ENCODE measurements at regions of chr22 and their contacts with region 1.

Region 1: GRCh38 chr22:22748297-22748743 is 103.9 kb downstream of the GGTLC2 start:
- DNase-seq: peak in 5 of 9 experiments; percentile 22 to 77 (median 45)
- ATAC-seq: peak; percentile 52
- H3K4me3 ChIP-seq: no peak overlapping the region
- H3K4me3 Mint-ChIP-seq: no peak overlapping the region
- H3K27ac ChIP-seq: no peak overlapping the region
- H3K27ac Mint-ChIP-seq: peak overlapping the region; percentile 32
- H3K4me1 ChIP-seq: peaks cover 12% of the 10 kb centered on the region
- H3K4me1 Mint-ChIP-seq: peaks cover 35% of the 10 kb centered on the region
- H3K27me3 ChIP-seq: no peaks in the 10 kb centered on the region
- H3K27me3 Mint-ChIP-seq: peaks cover 8% of the 10 kb centered on the region
- CTCF ChIP-seq: peak; percentile 69

Region 2: DNA sequence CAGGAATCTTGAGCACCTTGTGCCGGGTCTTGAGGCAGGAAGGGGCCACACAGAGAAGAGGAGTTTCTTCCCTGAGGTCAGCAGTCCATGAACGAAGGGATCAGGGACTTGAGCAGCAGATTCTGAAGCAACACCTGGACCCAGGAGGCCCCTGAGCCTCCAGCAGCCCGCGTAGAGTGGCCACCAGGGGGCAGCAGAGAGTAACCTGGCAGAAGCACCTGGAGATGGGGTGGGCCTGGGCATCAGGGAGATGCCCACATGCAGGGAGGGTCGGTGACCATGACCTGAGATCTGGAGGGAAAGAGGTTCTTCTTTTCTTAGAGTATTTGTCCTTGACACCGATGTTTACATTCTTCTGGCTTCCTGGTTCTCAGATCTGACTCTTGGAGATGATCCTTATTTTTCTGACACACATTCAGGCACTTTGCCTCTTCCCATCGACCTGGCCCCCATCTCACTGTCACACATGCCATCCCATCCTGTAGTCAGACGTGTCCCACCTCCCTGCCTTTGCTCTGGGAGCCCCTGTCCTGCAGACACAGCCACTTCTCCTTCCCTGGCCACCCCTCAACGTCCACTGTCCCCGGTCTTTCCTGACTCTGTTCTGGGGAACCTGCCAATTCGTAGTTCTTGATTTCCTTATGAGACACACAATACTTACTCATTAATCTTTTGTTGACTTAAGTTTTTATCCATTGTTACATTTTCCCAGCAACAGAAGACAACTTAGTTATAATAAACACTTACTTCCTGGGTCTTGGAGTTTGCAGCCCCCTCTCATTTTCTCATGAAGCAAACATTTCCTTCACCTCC is 37.4 kb before region 1 on chr22:
- CTCF ChIA-PET with region 1: interaction called, 28 read pairs
- POLR2A ChIA-PET with region 1: no interaction called
- intact Hi-C with region 1: loop called (anchors 1 to 2 kb)
- DNase-seq: peak; percentile 61 to 90 (median 79)
- ATAC-seq: peak; percentile 70
- H3K4me3 ChIP-seq: no peak overlapping the region
- H3K4me3 Mint-ChIP-seq: no peak overlapping the region
- H3K27ac ChIP-seq: no peak overlapping the region
- H3K27ac Mint-ChIP-seq: no peak overlapping the region
- H3K4me1 ChIP-seq: no peaks in the 10 kb centered on the region
- H3K4me1 Mint-ChIP-seq: no peaks in the 10 kb centered on the region
- H3K27me3 ChIP-seq: no peaks in the 10 kb centered on the region
- H3K27me3 Mint-ChIP-seq: no peaks in the 10 kb centered on the region
- CTCF ChIP-seq: peak; percentile 87

Region 3: DNA sequence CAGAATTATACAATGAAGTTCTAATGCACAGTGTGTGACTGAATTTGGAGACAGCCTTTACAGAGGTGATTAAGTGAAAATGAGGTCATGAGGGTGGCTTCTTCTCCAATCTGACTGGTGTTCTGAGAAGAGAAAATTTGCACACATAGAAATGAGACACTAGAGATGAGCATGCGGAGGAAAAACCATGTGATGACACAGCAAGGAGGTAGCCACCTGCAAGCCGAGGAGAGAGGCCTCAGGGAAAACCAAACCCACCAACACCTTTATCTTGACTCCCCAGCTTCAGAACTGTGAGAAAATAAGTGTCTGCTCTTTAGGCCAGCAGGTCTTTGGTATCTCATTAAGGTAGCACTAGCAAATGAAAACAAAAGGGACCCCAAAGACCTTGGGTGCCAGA is 10.7 kb before region 1 on chr22:
- CTCF ChIA-PET with region 1: interaction called, 14 read pairs
- POLR2A ChIA-PET with region 1: interaction called, 3 read pairs
- intact Hi-C with region 1: no loop called
- DNase-seq: peak in 3 of 9 experiments; percentile 35 to 70 (median 52)
- ATAC-seq: peak; percentile 72
- H3K4me3 ChIP-seq: no peak overlapping the region
- H3K4me3 Mint-ChIP-seq: no peak overlapping the region
- H3K27ac ChIP-seq: peak overlapping the region in 1 of 2 experiments; percentile 33
- H3K27ac Mint-ChIP-seq: peak overlapping the region; percentile 2
- H3K4me1 ChIP-seq: peaks cover 7% of the 10 kb centered on the region
- H3K4me1 Mint-ChIP-seq: peaks cover 30% of the 10 kb centered on the region
- H3K27me3 ChIP-seq: no peaks in the 10 kb centered on the region
- H3K27me3 Mint-ChIP-seq: peaks cover 8% of the 10 kb centered on the region
- CTCF ChIP-seq: no peak

Region 4: DNA sequence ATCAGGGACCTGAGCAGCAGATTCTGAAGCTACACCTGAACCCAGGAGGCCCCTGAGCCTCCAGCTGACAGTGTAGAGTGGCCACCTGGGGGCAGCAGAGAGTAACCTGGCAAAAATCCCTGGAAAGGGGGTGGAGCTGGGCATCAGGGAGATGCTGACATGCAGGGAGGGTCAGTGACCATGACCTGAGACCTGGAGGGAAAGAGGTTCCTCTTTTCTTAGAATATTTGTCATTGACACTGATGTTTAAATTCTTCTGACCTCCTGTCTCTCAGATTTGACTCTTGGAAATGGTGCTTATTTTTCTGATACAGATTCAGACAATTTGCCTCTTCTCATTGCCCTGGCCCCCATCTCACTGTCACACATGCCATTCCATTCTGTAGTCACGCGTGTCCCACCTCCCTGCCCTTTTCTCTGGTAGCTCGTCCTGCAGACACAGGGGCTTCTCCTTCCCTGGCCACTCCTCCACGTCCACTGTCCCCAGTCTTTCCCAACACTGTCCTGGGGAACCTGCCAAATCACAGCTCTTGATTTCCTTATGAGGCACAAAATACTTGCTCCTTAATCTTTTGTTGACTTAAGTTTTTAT is 22.1 kb after region 1 on chr22:
- CTCF ChIA-PET with region 1: interaction called, 167 read pairs
- POLR2A ChIA-PET with region 1: interaction called, 13 read pairs
- intact Hi-C with region 1: loop called (anchors 1 kb)
- DNase-seq: peak in 6 of 9 experiments; percentile 41 to 66 (median 59)
- ATAC-seq: peak; percentile 70
- H3K4me3 ChIP-seq: no peak overlapping the region
- H3K4me3 Mint-ChIP-seq: no peak overlapping the region
- H3K27ac ChIP-seq: peak overlapping the region in 1 of 2 experiments; percentile 60
- H3K27ac Mint-ChIP-seq: peak overlapping the region; percentile 73
- H3K4me1 ChIP-seq: no peaks in the 10 kb centered on the region
- H3K4me1 Mint-ChIP-seq: peaks cover 56% of the 10 kb centered on the region
- H3K27me3 ChIP-seq: no peaks in the 10 kb centered on the region
- H3K27me3 Mint-ChIP-seq: no peaks in the 10 kb centered on the region
- CTCF ChIP-seq: peak; percentile 74

Region 5: GRCh38 chr22:22818861-22819855 is 70.8 kb after region 1 on chr22:
- CTCF ChIA-PET with region 1: interaction called, 108 read pairs
- POLR2A ChIA-PET with region 1: interaction called, 27 read pairs
- intact Hi-C with region 1: no loop called
- DNase-seq: peak in 8 of 9 experiments; percentile 23 to 83 (median 56)
- ATAC-seq: peak; percentile 42
- H3K4me3 ChIP-seq: peak overlapping the region; percentile 50 to 51
- H3K4me3 Mint-ChIP-seq: peak overlapping the region; percentile 75
- H3K27ac ChIP-seq: peak overlapping the region; percentile 48 to 80
- H3K27ac Mint-ChIP-seq: peak overlapping the region; percentile 93
- H3K4me1 ChIP-seq: peaks cover 94% of the 10 kb centered on the region
- H3K4me1 Mint-ChIP-seq: peaks cover 98% of the 10 kb centered on the region
- H3K27me3 ChIP-seq: no peaks in the 10 kb centered on the region
- H3K27me3 Mint-ChIP-seq: no peaks in the 10 kb centered on the region
- CTCF ChIP-seq: no peak

Region 6: GRCh38 chr22:22942511-22943329 is 194.4 kb after region 1 on chr22:
- CTCF ChIA-PET with region 1: interaction called, 22 read pairs
- POLR2A ChIA-PET with region 1: no interaction called
- intact Hi-C with region 1: no loop called
- DNase-seq: peak; percentile 52 to 83 (median 79)
- ATAC-seq: peak; percentile 78
- H3K4me3 ChIP-seq: no peak overlapping the region
- H3K4me3 Mint-ChIP-seq: no peak overlapping the region
- H3K27ac ChIP-seq: no peak overlapping the region
- H3K27ac Mint-ChIP-seq: peak overlapping the region; percentile 4
- H3K4me1 ChIP-seq: no peaks in the 10 kb centered on the region
- H3K4me1 Mint-ChIP-seq: peaks cover 2% of the 10 kb centered on the region
- H3K27me3 ChIP-seq: no peaks in the 10 kb centered on the region
- H3K27me3 Mint-ChIP-seq: no peaks in the 10 kb centered on the region
- CTCF ChIP-seq: peak; percentile 76

Measured in CD8-positive, alpha-beta T cell (primary cell).